ENCODE measurements at regions of chr2 and their contacts with region 1.

Region 1: DNA sequence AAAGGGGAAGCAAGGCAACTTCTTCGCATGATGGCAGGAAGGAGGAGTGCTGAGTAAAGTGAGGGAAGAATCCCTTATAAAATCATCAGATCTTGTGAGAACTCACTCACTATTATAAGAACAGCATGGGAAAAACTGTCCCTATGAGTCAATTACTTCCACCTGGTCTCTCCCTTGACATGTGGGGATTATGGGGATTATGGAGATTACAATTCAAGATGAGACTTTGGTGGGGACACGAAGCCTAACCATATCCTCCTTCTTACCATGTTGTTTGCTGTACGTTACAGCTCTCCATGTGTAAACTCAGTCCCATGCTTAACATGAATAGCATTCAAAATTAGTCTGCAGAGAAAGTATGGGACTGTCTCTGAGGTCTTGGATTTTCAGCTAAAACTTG is 1096.8 kb upstream of the ACVR2A start:
- DNase-seq: no peak
- H3K4me3 Mint-ChIP-seq: no peak overlapping the region
- H3K27ac Mint-ChIP-seq: no peak overlapping the region
- H3K4me1 Mint-ChIP-seq: no peaks in the 10 kb centered on the region
- H3K27me3 Mint-ChIP-seq: no peaks in the 10 kb centered on the region
- CTCF ChIP-seq: no peak

Region 2: DNA sequence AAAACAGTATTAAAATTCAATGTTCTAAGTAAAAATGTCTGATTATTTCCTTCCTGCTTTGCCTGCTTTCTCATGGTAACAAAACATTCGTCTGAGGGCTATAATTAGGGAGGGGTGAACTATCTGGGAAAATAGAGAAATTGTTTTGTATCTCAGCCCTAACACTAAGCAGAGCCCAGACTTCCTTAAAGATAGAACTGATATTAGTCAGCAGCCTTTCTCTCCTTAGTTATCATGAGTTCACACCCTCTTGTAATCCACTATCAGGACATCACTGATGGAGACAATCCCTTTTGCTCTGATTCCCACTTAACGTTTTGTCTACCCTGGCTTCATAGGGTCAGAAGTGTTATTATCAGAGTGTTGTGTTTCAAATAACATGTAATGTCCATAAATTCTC is 1527.0 kb before region 1 on chr2:
- CTCF ChIA-PET with region 1: no interaction called
- intact Hi-C with region 1: no loop called
- DNase-seq: no peak
- H3K4me3 Mint-ChIP-seq: no peak overlapping the region
- H3K27ac Mint-ChIP-seq: no peak overlapping the region
- H3K4me1 Mint-ChIP-seq: no peaks in the 10 kb centered on the region
- H3K27me3 Mint-ChIP-seq: no peaks in the 10 kb centered on the region
- CTCF ChIP-seq: no peak

Region 3: GRCh38 chr2:146818122-146818521 is 70.1 kb after region 1 on chr2:
- CTCF ChIA-PET with region 1: no interaction called
- intact Hi-C with region 1: no loop called
- DNase-seq: no peak
- H3K4me3 Mint-ChIP-seq: no peak overlapping the region
- H3K27ac Mint-ChIP-seq: no peak overlapping the region
- H3K4me1 Mint-ChIP-seq: peaks cover 26% of the 10 kb centered on the region
- H3K27me3 Mint-ChIP-seq: no peaks in the 10 kb centered on the region
- CTCF ChIP-seq: no peak

Region 4: GRCh38 chr2:146867472-146867986 is 119.5 kb after region 1 on chr2:
- CTCF ChIA-PET with region 1: no interaction called
- intact Hi-C with region 1: no loop called
- DNase-seq: no peak
- H3K4me3 Mint-ChIP-seq: no peak overlapping the region
- H3K27ac Mint-ChIP-seq: no peak overlapping the region
- H3K4me1 Mint-ChIP-seq: no peaks in the 10 kb centered on the region
- H3K27me3 Mint-ChIP-seq: no peaks in the 10 kb centered on the region
- CTCF ChIP-seq: no peak

Region 5: DNA sequence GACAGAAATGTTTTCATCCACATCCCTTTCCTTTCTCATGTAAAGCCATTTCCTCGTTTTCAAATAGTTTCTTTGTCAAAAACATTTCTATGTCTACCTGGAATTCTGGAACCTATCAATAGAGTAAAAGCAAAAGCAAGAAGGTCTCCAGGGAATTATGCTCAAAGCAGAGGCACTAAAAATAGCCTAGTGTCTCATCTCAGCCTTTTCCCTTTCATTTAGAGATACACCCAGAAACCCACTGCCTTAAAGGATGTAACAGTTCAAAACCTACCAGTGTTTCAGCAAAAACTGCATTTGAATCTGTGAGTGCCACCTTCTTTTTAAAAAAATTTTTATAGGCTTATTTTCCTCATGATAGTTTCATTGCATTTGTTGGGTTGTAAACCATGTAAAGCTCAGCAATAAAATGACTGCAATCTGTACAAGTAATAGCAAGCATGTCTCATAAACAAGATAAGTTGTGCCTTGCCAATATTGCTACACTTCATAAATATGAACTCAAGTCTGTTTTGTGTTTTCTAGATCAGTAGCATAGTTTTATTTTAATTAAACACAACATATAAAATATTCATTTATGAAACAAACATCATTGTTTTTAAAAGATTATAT is 169.5 kb after region 1 on chr2:
- CTCF ChIA-PET with region 1: no interaction called
- intact Hi-C with region 1: loop called (anchors 5 kb)
- DNase-seq: no peak
- H3K4me3 Mint-ChIP-seq: no peak overlapping the region
- H3K27ac Mint-ChIP-seq: no peak overlapping the region
- H3K4me1 Mint-ChIP-seq: peaks cover 9% of the 10 kb centered on the region
- H3K27me3 Mint-ChIP-seq: no peaks in the 10 kb centered on the region
- CTCF ChIP-seq: no peak